Natural killer cell (primary cell): ENCODE measurements at regions of chr12 and their contacts with region 1.

Region 1: DNA sequence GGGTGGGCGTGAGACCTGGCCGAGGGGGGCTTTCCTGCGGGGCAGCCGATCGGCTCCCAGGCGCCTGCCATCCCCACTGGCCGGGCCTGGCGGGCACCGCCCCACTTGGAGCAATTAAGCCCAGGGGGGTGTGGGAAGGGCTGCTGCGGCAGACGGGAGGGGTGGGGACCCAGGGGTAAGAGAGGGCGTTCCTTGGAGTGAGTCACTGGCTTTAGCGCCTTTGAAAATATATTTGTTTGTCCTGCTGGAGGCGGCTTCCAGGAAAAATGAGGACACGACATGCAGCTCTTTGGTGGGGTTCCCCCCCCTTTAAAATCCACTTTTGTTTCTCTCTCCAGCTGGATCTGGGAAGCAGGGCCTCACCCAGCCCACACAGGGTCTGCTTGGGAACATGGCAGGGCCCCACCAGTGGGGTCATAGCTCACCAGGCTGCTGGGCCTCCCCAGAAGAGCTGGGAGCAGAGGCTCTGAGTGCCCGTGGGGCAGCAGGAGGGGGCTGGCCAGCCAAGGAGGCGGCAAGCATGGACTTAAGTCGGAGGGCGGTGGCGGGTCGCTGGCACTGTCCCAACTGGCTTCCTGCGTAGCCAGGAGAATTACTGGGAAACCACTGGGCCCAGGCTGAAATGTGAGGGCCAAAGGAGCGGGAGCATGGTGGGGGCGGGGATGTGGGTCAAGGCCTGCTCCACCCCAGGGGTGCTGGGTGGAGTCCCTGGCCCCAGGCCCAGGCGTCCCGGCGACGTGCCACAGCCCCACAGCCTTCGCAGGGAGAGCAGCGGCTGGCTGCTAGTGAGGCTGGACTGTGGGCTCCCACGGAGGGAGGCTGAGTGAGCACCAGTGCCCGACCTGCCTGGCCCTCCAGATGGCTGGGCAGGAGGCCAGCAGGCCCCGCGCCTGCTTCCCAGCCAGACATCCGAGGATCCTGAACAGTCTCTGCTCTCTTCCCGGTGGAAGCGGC is 128.0 kb downstream of the RFLNA start:
- DNase-seq: no peak
- ATAC-seq: no peak
- H3K4me3 ChIP-seq: no peak overlapping the region
- H3K4me3 Mint-ChIP-seq: no peak overlapping the region
- H3K27ac ChIP-seq: no peak overlapping the region
- H3K27ac Mint-ChIP-seq: peak overlapping the region; percentile 90
- H3K4me1 ChIP-seq: peaks cover 28% of the 10 kb centered on the region
- H3K4me1 Mint-ChIP-seq: peaks cover 30 to 48% of the 10 kb centered on the region in 2 donors
- H3K27me3 ChIP-seq: no peaks in the 10 kb centered on the region
- H3K27me3 Mint-ChIP-seq: no peaks in the 10 kb centered on the region
- CTCF ChIP-seq: no peak

Region 2: DNA sequence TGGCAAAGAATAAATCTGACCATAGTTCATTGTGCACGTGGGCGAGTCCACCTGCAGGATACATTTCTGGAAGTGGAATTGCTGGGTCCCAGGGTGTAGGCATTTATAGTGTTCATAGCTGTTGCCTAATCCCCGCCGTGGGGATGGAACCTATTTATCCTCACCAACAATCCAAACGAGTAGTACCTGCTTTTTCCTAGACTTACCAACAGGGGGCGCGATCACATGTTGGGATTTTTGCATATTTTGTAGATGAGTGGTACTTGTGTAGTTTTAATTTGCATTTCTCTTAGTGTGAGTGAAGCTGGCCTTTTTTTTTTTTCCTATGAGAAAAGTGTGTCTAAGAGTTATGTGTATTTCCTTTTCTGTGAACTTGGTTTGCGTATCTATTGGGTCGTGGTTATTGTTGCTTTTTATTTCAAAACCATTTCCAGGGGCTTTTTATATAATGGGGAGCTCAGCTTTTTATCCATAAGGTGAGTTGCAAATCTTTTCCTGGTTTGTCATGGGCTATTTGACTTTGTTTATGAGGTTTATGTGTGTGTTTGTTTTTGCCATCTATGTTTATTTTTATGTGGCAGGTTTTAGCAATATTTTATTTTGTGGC is 517.4 kb before region 1 on chr12:
- intact Hi-C with region 1: no loop called
- DNase-seq: peak; percentile 44 to 88
- ATAC-seq: peak; percentile 63 to 87 (median 77)
- H3K4me3 ChIP-seq: no peak overlapping the region
- H3K4me3 Mint-ChIP-seq: no peak overlapping the region
- H3K27ac ChIP-seq: no peak overlapping the region
- H3K27ac Mint-ChIP-seq: no peak overlapping the region
- H3K4me1 ChIP-seq: no peaks in the 10 kb centered on the region
- H3K4me1 Mint-ChIP-seq: peaks cover 14 to 24% of the 10 kb centered on the region in 2 donors
- H3K27me3 ChIP-seq: no peaks in the 10 kb centered on the region
- H3K27me3 Mint-ChIP-seq: peaks cover 11% of the 10 kb centered on the region in 2 donors
- CTCF ChIP-seq: peak; percentile 83

Region 3: GRCh38 chr12:123938679-123939480 is 484.0 kb before region 1 on chr12:
- intact Hi-C with region 1: loop called (anchors 10 kb)
- DNase-seq: peak in 1 of 2 donors; percentile 36
- ATAC-seq: no peak
- H3K4me3 ChIP-seq: no peak overlapping the region
- H3K4me3 Mint-ChIP-seq: peak overlapping the region; percentile 84
- H3K27ac ChIP-seq: peak overlapping the region; percentile 69
- H3K27ac Mint-ChIP-seq: peak overlapping the region; percentile 95 to 96
- H3K4me1 ChIP-seq: peaks cover 53% of the 10 kb centered on the region
- H3K4me1 Mint-ChIP-seq: peaks cover 53 to 58% of the 10 kb centered on the region in 2 donors
- H3K27me3 ChIP-seq: no peaks in the 10 kb centered on the region
- H3K27me3 Mint-ChIP-seq: no peaks in the 10 kb centered on the region
- CTCF ChIP-seq: peak; percentile 16

Region 4: GRCh38 chr12:124388679-124389536 is 33.9 kb before region 1 on chr12:
- intact Hi-C with region 1: loop called (anchors 2 kb)
- DNase-seq: peak; percentile 75 to 77
- ATAC-seq: peak; percentile 75 to 80 (median 80)
- H3K4me3 ChIP-seq: peak overlapping the region; percentile 36
- H3K4me3 Mint-ChIP-seq: peak overlapping the region; percentile 80
- H3K27ac ChIP-seq: peak overlapping the region; percentile 53
- H3K27ac Mint-ChIP-seq: peak overlapping the region; percentile 68 to 80
- H3K4me1 ChIP-seq: peaks cover 59% of the 10 kb centered on the region
- H3K4me1 Mint-ChIP-seq: peaks cover 28 to 56% of the 10 kb centered on the region in 2 donors
- H3K27me3 ChIP-seq: no peaks in the 10 kb centered on the region
- H3K27me3 Mint-ChIP-seq: no peaks in the 10 kb centered on the region
- CTCF ChIP-seq: no peak

Region 5: DNA sequence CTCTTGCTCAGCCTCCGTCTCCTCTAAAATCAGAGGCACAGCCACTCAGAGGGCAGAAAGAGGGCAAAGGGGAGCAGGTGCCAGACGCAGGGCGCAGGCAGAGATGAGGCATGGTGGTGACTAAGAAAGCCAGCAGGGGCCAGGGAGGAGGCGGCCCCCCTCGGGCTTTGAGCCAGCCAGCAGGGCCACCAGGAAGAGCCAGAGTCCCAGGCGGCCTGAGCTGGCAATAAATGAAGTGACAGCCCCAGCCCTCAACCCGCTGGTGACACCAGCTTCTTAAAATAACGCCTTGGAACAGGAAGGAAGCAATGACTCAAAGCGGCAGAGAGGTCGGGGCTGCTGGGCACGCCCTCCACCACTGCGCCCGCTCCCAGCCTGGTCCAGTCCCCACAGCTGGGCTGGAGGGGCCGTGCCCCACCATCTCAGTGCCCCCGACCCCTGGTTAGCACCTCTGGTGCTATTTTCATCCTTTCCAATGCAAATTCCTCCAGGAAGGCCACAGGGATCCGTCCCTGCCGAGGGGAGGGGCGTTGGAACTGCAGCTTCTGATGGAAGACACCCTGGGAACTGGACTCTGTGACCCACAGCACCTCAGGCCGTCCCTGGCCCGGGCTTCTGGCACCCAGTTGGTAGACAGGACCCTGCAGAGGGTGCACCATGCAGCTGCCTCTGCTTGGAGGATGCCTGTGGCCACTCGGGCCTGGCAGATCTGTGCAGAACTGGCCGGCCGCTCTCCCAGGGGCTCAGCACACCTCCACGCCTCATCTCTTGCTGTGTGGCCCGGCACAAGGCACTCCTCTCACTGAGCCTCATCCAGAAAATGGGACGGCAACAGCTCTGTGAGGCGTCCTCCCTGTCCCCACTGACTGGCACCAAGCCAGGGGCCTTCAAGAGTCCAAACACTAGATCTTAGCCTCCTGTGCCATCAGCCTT is 30.8 kb after region 1 on chr12:
- intact Hi-C with region 1: loop called (anchors 1 kb)
- DNase-seq: peak; percentile 83 to 91
- ATAC-seq: peak; percentile 68 to 86 (median 78)
- H3K4me3 ChIP-seq: peak overlapping the region; percentile 27
- H3K4me3 Mint-ChIP-seq: peak overlapping the region; percentile 80
- H3K27ac ChIP-seq: peak overlapping the region; percentile 96
- H3K27ac Mint-ChIP-seq: peak overlapping the region; percentile 73 to 96
- H3K4me1 ChIP-seq: peaks cover 95% of the 10 kb centered on the region
- H3K4me1 Mint-ChIP-seq: peaks cover 66 to 85% of the 10 kb centered on the region in 2 donors
- H3K27me3 ChIP-seq: no peaks in the 10 kb centered on the region
- H3K27me3 Mint-ChIP-seq: no peaks in the 10 kb centered on the region
- CTCF ChIP-seq: no peak

Region 6: GRCh38 chr12:124466216-124467128 is 43.6 kb after region 1 on chr12:
- intact Hi-C with region 1: loop called (anchors 2 kb)
- DNase-seq: peak; percentile 88 to 95
- ATAC-seq: peak; percentile 94 to 99 (median 98)
- H3K4me3 ChIP-seq: peak overlapping the region; percentile 31
- H3K4me3 Mint-ChIP-seq: peak overlapping the region; percentile 81
- H3K27ac ChIP-seq: peak overlapping the region; percentile 85
- H3K27ac Mint-ChIP-seq: peak overlapping the region; percentile 87 to 94
- H3K4me1 ChIP-seq: peaks cover 38% of the 10 kb centered on the region
- H3K4me1 Mint-ChIP-seq: peaks cover 42 to 70% of the 10 kb centered on the region in 2 donors
- H3K27me3 ChIP-seq: no peaks in the 10 kb centered on the region
- H3K27me3 Mint-ChIP-seq: no peaks in the 10 kb centered on the region
- CTCF ChIP-seq: peak; percentile 57

Region 7: DNA sequence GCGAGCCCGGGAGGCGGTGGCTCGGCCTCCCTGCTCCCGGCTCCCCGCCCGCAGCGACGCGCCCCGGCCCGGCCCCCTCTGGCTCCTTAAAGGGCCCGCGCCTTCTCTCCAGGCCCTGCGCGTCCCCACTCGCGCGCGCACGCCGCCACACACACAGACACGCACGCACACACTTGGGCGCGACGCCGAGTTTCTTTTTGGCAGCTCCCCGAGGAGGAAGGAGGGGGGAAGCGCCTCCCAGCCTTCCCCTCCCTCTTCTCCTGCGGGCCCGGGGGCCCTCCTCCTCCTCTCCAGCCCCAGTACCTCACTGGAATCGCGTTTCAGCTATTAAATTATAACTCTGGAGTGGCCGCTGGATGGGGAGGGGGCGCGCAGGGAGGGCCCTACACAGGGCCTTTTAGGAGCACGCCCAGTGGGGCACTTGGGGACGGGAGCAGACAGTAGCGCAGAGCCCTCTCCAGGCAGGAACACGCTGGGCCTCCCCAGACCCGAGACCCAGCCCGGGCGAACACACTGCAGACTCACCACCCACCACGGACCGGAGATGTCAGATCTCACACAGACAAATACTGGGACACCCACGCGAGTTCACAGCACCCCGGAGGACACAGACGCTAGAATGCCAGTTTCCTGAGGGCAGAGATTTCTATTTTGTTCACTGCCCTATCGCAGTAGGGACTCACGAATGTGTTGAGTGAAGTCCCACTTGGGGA is 145.0 kb after region 1 on chr12:
- intact Hi-C with region 1: loop called (anchors 2 kb)
- DNase-seq: peak; percentile 57 to 90
- ATAC-seq: peak; percentile 66 to 79 (median 77)
- H3K4me3 ChIP-seq: peak overlapping the region; percentile 66
- H3K4me3 Mint-ChIP-seq: peak overlapping the region; percentile 88
- H3K27ac ChIP-seq: peak overlapping the region; percentile 52
- H3K27ac Mint-ChIP-seq: peak overlapping the region in 1 of 2 donors; percentile 76
- H3K4me1 ChIP-seq: peaks cover 37% of the 10 kb centered on the region
- H3K4me1 Mint-ChIP-seq: peaks cover 5 to 19% of the 10 kb centered on the region in 2 donors
- H3K27me3 ChIP-seq: no peaks in the 10 kb centered on the region
- H3K27me3 Mint-ChIP-seq: no peaks in the 10 kb centered on the region
- CTCF ChIP-seq: no peak

Region 8: GRCh38 chr12:124613151-124613585 is 190.3 kb after region 1 on chr12:
- intact Hi-C with region 1: no loop called
- DNase-seq: no peak
- ATAC-seq: no peak
- H3K4me3 ChIP-seq: no peak overlapping the region
- H3K4me3 Mint-ChIP-seq: no peak overlapping the region
- H3K27ac ChIP-seq: no peak overlapping the region
- H3K27ac Mint-ChIP-seq: no peak overlapping the region
- H3K4me1 ChIP-seq: peaks cover 31% of the 10 kb centered on the region
- H3K4me1 Mint-ChIP-seq: peaks cover 9 to 16% of the 10 kb centered on the region in 2 donors
- H3K27me3 ChIP-seq: peaks cover 3% of the 10 kb centered on the region
- H3K27me3 Mint-ChIP-seq: peaks cover 31% of the 10 kb centered on the region in 2 donors
- CTCF ChIP-seq: no peak